Adrenal gland (tissue), 19 donors: ENCODE measurements at regions of chr19 and their contacts with region 1.

Region 1: GRCh38 chr19:39532233-39533002 is at the start of gene EID2B:
- DNase-seq: peak; percentile 93 to 98 (median 97)
- H3K4me3 ChIP-seq: peak within 1 kb of the TSS; percentile 13 to 90 (median 48)
- H3K27ac ChIP-seq: peak within 1 kb of the TSS in 4 of 5 donors; percentile 74 to 91 (median 85)
- H3K4me1 ChIP-seq: peaks cover 9 to 20% of the 10 kb centered on the region in 2 donors
- H3K27me3 ChIP-seq: no peaks in the 10 kb centered on the region
- CTCF ChIP-seq: peak; percentile 89 to 100 (median 100)
- POLR2A ChIP-seq: peak; percentile 46 to 83
- total RNA-seq, gene EID2B: 1.6 to 6.7 (median 3.8) TPM

Region 2: DNA sequence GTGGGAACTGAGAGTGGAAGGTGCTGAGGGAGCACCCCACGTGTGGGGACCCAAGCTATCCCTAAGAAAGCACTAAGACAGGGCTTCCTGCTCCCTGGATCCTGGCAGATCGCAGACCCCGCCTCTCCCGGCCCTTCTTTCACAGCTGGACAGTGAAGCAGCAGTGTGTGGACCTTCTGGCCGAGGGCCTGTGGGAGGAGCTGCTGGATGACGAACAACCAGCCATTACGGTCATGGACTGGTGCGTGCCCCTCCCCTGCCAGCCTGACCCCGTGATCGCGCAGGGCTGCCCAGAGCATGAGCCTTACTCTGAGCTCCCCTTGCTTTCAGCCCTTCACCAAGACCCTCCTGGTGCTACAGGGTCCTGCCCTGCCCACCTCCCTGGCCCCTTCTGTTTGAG is 333.4 kb before region 1 on chr19:
- intact Hi-C with region 1: no loop called
- DNase-seq: peak; percentile 69 to 88 (median 80)
- H3K4me3 ChIP-seq: no peak overlapping the region
- H3K27ac ChIP-seq: no peak overlapping the region
- H3K4me1 ChIP-seq: no peaks in the 10 kb centered on the region
- H3K27me3 ChIP-seq: peaks cover 32% of the 10 kb centered on the region
- CTCF ChIP-seq: no peak
- POLR2A ChIP-seq: no peak

Region 3: DNA sequence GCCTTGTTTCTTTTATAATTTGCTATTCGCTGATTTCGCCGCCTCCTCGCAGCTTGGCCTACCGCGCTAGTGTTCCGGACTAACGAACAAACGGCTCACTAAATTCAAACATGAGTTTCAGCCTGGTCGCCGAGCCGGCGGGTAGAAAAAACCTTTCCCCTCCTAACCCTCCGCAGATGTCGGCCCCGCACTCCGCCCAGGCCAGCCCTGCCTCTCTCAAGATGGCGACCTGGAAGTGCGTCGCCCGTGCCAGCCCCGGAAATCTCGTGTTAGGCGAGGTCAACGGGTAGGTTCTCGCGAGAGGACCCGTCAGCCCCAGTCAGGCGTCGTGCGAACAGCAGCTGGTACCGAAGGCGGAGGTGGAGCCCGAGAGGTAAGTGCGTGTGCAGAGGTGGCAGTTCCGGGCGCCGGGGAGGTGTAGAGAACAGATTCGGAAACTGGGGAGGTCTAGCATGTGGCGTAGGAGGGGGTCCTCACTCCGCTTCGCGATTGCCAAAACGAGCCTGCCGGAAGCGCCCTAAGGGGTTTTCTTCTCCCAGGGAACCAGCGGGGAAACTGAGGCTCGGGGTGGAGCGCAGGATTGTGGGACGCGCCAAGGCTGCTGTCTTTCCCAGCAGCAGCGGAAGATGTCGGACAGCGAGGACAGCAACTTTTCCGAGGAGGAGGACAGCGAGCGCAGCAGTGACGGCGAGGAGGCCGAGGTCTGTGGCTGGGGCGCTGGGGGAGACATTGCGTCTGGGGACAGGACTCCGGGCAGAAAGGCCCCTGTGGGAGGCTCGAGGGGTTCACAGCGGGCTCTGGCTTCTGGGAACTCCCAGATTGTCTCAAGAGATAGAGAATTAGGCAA is 86.9 kb before region 1 on chr19 and contains the start of gene SUPT5H:
- intact Hi-C with region 1: loop called in 1 of 2 experiments (anchors 10 kb)
- DNase-seq: peak; percentile 97 to 99 (median 98)
- H3K4me3 ChIP-seq: peak within 1 kb of the TSS; percentile 70 to 76 (median 72)
- H3K27ac ChIP-seq: peak within 1 kb of the TSS; percentile 70 to 95 (median 91)
- H3K4me1 ChIP-seq: peaks cover 17 to 31% of the 10 kb centered on the region in 2 donors
- H3K27me3 ChIP-seq: no peaks in the 10 kb centered on the region
- CTCF ChIP-seq: no peak
- POLR2A ChIP-seq: peak; percentile 91 to 98
- total RNA-seq, gene SUPT5H: 42.0 to 145 (median 85.3) TPM

Region 4: GRCh38 chr19:39474139-39474622 is 58.2 kb before region 1 on chr19:
- intact Hi-C with region 1: loop called (anchors 5 to 10 kb)
- DNase-seq: peak; percentile 40 to 76 (median 59)
- H3K4me3 ChIP-seq: no peak overlapping the region
- H3K27ac ChIP-seq: no peak overlapping the region
- H3K4me1 ChIP-seq: no peaks in the 10 kb centered on the region
- H3K27me3 ChIP-seq: no peaks in the 10 kb centered on the region
- CTCF ChIP-seq: peak; percentile 57 to 82 (median 66)
- POLR2A ChIP-seq: no peak